ENCODE measurements at regions of chr9 and their contacts with region 1.

Region 1: DNA sequence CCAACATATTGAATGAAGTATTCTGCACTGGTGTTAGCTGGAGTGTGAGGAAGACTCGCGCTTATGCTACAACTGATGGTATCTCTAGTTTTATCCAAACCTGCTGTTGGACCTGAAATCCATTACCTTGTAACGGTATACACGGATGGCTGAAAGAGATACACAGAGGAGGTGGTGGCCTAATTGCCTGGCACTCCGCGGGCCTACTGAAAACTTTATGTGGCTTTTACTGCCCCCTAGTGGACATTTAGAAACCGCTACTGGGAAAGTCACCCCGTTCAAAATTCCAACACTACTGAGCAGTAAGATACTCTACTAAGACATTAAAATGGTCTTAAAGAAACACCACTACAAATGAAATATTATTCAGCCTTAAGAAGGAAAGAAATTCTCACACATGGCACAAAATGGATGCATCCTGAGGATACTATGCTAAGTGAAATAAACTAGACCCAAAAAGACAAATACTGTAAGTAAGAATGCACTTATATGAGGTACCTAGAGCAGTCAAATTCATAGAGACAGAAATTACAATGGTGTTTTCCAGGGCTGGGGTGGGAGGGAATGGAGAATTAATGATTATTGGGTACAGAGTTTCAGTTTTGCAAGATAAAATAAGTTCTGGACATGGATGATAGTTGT is 100.4 kb downstream of the TTLL11 start:
- DNase-seq: peak; percentile 85
- H3K4me3 ChIP-seq: no peak overlapping the region
- H3K27ac ChIP-seq: no peak overlapping the region
- H3K4me1 ChIP-seq: peaks cover 0 to 9% (median 6%) of the 10 kb centered on the region in 4 donors
- H3K27me3 ChIP-seq: no peaks in the 10 kb centered on the region
- CTCF ChIP-seq: peak; percentile 67 to 77 (median 75)
- EP300 ChIP-seq: no peak
- POLR2A ChIP-seq: no peak

Region 2: DNA sequence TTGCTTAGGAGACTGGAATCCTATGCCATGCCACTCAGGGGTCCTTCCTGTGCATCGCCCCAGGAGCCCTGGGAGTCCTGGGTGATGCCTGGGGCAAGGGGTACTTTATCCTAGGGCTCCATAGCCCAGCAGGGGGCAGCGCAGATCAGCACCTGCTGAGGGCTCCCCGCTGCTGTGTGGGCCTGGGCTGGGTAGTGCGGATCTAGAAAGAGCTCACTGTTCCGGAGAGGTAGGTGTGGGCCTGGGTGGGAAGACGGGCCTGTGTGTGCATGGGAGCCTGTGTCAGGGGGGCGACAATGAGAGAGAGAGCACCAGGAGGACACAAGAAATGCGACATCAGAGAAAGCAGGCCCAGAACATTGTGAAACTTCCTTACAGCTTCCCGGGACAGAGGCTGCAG is 352.6 kb before region 1 on chr9:
- intact Hi-C with region 1: loop called (anchors 5 kb)
- DNase-seq: peak; percentile 82
- H3K4me3 ChIP-seq: no peak overlapping the region
- H3K27ac ChIP-seq: peak overlapping the region in 3 of 4 donors; percentile 40 to 69 (median 51)
- H3K4me1 ChIP-seq: peaks cover 0 to 53% (median 51%) of the 10 kb centered on the region in 4 donors
- H3K27me3 ChIP-seq: no peaks in the 10 kb centered on the region
- CTCF ChIP-seq: peak; percentile 28 to 64 (median 64)
- EP300 ChIP-seq: no peak
- POLR2A ChIP-seq: no peak

Measured in sigmoid colon (tissue), 7 donors.